ENCODE measurements at regions of chr11 and their contacts with region 1.

Region 1: DNA sequence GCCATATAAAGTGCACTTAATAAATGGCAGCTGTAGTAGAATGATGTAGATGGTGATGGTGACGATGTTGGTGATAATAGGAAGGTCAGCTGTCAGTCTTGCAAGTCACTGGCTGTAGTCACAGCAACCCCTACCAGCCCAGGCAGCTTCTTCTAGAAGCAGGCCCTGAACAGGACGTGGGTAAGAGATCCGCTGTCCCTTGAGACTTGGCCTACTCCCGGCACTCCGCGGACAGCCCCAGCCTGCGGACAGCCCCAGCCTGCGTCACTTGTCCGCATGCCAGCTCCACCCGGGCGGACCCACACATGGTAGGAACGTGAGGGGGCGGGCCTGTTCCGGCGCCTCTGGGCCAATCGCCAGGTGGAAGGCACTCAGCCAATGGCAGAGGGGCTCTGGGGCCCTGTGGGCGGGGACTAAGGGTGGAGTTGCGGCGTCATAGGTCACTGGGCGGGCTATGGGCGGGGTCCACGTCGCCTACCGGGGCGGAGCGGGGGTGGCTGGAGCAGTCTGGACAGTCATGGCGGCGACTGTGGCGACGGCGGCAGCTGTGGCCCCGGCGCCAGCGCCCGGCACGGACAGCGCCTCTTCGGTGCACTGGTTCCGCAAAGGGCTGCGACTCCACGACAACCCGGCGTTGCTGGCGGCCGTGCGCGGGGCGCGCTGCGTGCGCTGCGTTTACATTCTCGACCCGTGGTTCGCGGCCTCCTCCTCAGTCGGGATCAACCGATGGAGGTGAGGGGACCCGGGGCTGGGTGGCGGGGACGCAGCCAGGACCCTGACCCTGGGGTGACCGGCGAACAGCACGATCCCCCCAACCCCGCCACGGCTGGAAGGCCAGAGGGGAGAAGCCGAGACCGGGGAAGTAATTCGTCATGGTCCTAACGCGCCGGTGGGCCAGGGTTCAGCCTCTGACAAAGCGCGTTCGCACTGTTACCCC is at the start of gene CRY2:
- DNase-seq: peak; percentile 96 to 99 (median 98)
- ATAC-seq: peak; percentile 78 to 83
- H3K4me3 Mint-ChIP-seq: peak within 1 kb of the TSS; percentile 77 to 93 (median 88)
- H3K27ac Mint-ChIP-seq: peak within 1 kb of the TSS; percentile 83 to 100 (median 98)
- H3K4me1 Mint-ChIP-seq: peaks cover 26 to 67% (median 62%) of the 10 kb centered on the region in 4 donors
- H3K27me3 Mint-ChIP-seq: peaks cover 0 to 3% (median 0%) of the 10 kb centered on the region in 5 donors
- polyA plus RNA-seq, gene CRY2: 24.3 to 33.4 (median 30.3) TPM

Region 2: DNA sequence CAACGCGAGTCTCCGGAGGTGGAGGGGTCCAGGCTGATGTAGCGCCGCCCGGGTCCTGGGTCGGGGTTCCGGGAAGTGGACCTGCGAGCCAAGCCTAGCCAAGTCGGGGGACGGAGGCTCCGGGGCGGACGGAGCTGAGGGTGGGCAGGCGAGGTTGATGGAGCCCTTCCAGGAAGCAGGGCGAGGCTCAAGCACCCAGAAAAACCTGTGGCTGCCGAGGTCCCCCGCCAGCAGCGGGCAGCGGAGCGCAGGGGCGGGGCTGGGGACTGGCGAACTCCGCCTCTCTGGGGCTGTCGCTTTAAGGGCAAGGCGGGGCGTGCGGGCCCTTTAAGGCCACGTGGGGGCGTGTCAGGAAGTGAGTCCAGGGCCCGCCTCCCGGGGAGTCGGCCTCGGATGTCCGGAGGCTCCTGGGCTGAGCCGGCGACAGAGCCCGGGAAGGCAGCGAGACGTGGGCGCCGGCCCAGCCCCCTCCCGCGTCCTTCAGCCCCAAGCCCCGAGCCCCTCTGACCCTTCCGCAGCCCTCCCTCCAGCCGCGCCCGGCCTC is 42.4 kb before region 1 on chr11 and contains the start of gene SLC35C1:
- POLR2A ChIA-PET with region 1: interaction called, 20 read pairs
- DNase-seq: peak; percentile 90 to 97 (median 92)
- ATAC-seq: peak; percentile 89 to 93
- H3K4me3 Mint-ChIP-seq: peak within 1 kb of the TSS; percentile 89 to 98 (median 92)
- H3K27ac Mint-ChIP-seq: peak within 1 kb of the TSS; percentile 86 to 96 (median 92)
- H3K4me1 Mint-ChIP-seq: peaks cover 20 to 49% (median 47%) of the 10 kb centered on the region in 4 donors
- H3K27me3 Mint-ChIP-seq: no peaks in the 10 kb centered on the region
- polyA plus RNA-seq, gene SLC35C1: 5.6 to 10.0 (median 8.4) TPM

Region 3: DNA sequence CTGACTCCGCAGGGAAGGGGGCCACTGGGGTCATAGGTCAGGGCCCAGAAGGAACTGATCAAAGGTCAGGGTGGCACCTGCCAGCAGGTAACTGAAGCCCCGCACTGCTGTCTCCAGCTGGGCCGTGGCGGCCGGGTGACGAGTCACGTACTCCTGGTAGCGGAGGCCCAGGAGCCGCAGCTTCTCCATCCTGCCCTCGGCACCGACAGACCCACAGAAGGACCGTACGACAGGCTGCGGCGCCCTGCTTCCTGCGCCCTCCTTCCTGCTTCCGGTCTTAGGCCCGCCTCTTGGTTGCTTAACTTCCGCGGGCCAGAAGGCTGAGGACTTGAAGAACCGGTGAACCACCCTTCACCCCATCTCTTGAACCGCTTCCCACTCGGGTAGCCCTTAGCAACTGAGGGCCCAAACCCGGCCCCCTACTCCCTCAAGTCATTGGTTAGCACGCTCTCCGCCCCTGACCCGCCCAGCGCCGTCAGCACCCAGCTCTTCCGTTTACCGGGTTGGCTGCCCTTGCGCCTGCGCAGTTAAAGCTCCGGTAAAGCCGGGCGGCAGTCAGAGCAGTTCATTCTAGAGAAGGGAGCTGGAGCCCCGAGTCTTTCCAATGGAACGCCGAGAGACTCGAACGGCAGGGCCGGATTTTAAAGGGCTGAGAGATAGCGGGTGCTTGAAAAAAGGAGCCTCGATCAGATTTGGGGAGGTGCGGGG is 70.5 kb after region 1 on chr11 and contains the start of gene PEX16:
- POLR2A ChIA-PET with region 1: interaction called, 17 read pairs
- DNase-seq: peak; percentile 89 to 98 (median 96)
- ATAC-seq: peak; percentile 90 to 91
- H3K4me3 Mint-ChIP-seq: peak within 1 kb of the TSS; percentile 90 to 98 (median 95)
- H3K27ac Mint-ChIP-seq: peak within 1 kb of the TSS; percentile 94 to 100 (median 98)
- H3K4me1 Mint-ChIP-seq: peaks cover 16 to 62% (median 59%) of the 10 kb centered on the region in 4 donors
- H3K27me3 Mint-ChIP-seq: peaks cover 0 to 3% (median 0%) of the 10 kb centered on the region in 5 donors
- polyA plus RNA-seq, gene PEX16: 46.1 to 54.1 (median 53.2) TPM